ENCODE measurements at regions of chr11 and their contacts with region 1.

Region 1: GRCh38 chr11:47932544-47932943 is 47.8 kb upstream of the PTPRJ start:
- DNase-seq: no peak
- H3K4me3 ChIP-seq: no peak overlapping the region
- H3K27ac ChIP-seq: no peak overlapping the region
- H3K4me1 ChIP-seq: peaks cover 0 to 8% (median 0%) of the 10 kb centered on the region in 4 donors
- H3K27me3 ChIP-seq: no peaks in the 10 kb centered on the region
- CTCF ChIP-seq: no peak

Region 2: DNA sequence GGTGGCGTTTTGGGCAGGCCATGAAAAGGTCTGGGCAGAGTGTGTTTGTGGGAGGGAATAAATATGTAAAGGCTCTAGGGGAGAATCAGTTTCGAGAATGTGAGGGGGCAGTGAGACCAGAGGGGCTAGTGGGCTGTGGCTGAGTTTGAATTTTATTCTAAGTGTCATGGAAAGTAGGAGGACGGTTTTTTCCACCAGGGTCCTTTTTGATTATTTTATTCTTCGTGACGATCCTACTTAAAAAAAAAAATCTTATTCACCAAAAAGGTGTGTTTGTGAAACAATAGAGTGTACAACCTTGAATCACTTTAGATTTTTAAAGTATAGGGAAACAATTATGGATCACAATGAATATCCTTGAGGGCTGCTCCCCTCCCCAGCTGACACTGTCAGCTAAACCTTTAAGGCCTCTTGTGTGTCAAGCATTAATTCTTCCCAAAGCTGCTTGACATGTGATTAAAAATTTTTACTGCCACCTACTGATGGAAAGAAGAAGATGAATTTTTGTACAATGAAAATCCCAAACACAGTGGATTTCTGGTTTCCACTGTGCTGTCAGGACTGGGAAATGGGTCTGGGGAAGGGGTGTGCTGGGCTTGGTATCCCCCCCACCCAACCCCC is 176.6 kb after region 1 on chr11:
- intact Hi-C with region 1: loop called (anchors 2 kb)
- DNase-seq: no peak
- H3K4me3 ChIP-seq: peak overlapping the region in 1 of 2 donors; percentile 5
- H3K27ac ChIP-seq: no peak overlapping the region
- H3K4me1 ChIP-seq: peaks cover 0 to 18% (median 10%) of the 10 kb centered on the region in 4 donors
- H3K27me3 ChIP-seq: no peaks in the 10 kb centered on the region
- CTCF ChIP-seq: peak; percentile 22 to 30